Pancreas (tissue), 10 donors: ENCODE measurements at regions of chr3 and their contacts with region 1.

Region 1: GRCh38 chr3:142279965-142280590 is 54.7 kb upstream of the GK5 start:
- DNase-seq: peak in 3 of 6 donors; percentile 19 to 57 (median 24)
- ATAC-seq: peak; percentile 87 to 99 (median 96)
- H3K4me3 ChIP-seq: no peak overlapping the region
- H3K27ac ChIP-seq: no peak overlapping the region
- H3K4me1 ChIP-seq: no peaks in the 10 kb centered on the region
- H3K27me3 ChIP-seq: no peaks in the 10 kb centered on the region
- CTCF ChIP-seq: peak; percentile 27 to 56 (median 46)

Region 2: GRCh38 chr3:141959921-141960554 is 320.0 kb before region 1 on chr3:
- intact Hi-C with region 1: loop called in 1 of 3 experiments (anchors 10 kb)
- DNase-seq: no peak
- ATAC-seq: peak in 1 of 4 donors; percentile 28
- H3K4me3 ChIP-seq: no peak overlapping the region
- H3K27ac ChIP-seq: no peak overlapping the region
- H3K4me1 ChIP-seq: no peaks in the 10 kb centered on the region
- H3K27me3 ChIP-seq: no peaks in the 10 kb centered on the region
- CTCF ChIP-seq: no peak

Region 3: DNA sequence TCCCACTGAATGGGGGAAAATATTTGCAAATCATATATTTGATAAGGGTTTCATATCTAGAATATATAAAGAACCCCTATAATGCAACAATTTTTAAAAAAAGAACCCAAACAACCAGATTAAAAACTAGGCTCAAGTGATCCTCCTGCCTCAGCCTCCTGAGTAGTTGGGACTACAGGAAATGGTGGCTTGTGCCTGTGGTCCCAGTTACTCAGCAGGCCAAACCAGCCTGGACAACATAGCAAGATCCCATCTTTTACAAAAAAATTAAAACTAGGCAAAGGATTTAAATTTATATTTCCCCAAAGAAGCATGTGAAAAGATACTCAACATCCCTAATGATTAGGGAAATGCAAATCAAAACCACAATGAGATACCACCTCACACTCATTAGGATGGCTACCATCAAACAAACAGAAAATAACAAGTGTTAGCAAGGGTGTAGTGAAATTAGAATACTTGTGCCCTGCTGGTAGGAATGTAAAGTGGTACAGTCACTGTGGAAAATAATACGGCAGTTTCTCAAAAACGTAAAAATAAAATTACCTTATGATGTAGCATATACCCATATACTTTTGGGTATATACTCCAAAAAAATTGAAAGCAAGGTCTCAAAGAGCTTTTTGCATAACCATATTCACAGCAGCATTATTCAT is 150.4 kb before region 1 on chr3:
- intact Hi-C with region 1: loop called in 2 of 3 experiments (anchors 5 to 10 kb)
- DNase-seq: no peak
- ATAC-seq: no peak
- H3K4me3 ChIP-seq: no peak overlapping the region
- H3K27ac ChIP-seq: no peak overlapping the region
- H3K4me1 ChIP-seq: no peaks in the 10 kb centered on the region
- H3K27me3 ChIP-seq: no peaks in the 10 kb centered on the region
- CTCF ChIP-seq: no peak